H1 (cell line): ENCODE measurements at regions of chr17 and their contacts with region 1.

Region 1: GRCh38 chr17:81094509-81095382 is 59.8 kb downstream of the BAIAP2 start:
- DNase-seq: peak; percentile 73 to 76
- H3K4me3 ChIP-seq: no peak overlapping the region; a peak in 1 of 8 replicates
- H3K27ac ChIP-seq: no peak overlapping the region; the same call in 1 of the 2 replicates
- H3K4me1 ChIP-seq: peaks cover 7 to 40% (median 30%) of the 10 kb centered on the region in 4 experiments
- H3K27me3 ChIP-seq: no peaks in the 10 kb centered on the region
- CTCF ChIP-seq: no peak
- EP300 ChIP-seq: peak in 1 of 2 experiments; percentile 46; a peak in 1 of 3 replicates
- POLR2A ChIP-seq: no peak
- RAD21 ChIP-seq: no peak

Region 2: GRCh38 chr17:80894439-80894721 is 200.4 kb before region 1 on chr17:
- CTCF ChIA-PET with region 1: no interaction called
- POLR2A ChIA-PET with region 1: no interaction called
- DNase-seq: no peak
- H3K4me3 ChIP-seq: no peak overlapping the region
- H3K27ac ChIP-seq: no peak overlapping the region
- H3K4me1 ChIP-seq: no peaks in the 10 kb centered on the region
- H3K27me3 ChIP-seq: no peaks in the 10 kb centered on the region; a peak in 1 of 7 replicates
- CTCF ChIP-seq: peak in 1 of 3 experiments; percentile 21; a peak in 1 of 4 replicates
- EP300 ChIP-seq: no peak
- POLR2A ChIP-seq: no peak
- RAD21 ChIP-seq: no peak; a peak in 1 of 4 replicates

Region 3: GRCh38 chr17:80997424-80997841 is 97.3 kb before region 1 on chr17:
- CTCF ChIA-PET with region 1: no interaction called
- POLR2A ChIA-PET with region 1: no interaction called
- DNase-seq: no peak
- H3K4me3 ChIP-seq: no peak overlapping the region
- H3K27ac ChIP-seq: no peak overlapping the region
- H3K4me1 ChIP-seq: peaks cover 0 to 2% (median under 1%) of the 10 kb centered on the region in 4 experiments; a peak in 5 of 7 replicates
- H3K27me3 ChIP-seq: peaks cover 0 to 5% (median 3%) of the 10 kb centered on the region in 4 experiments; a peak in 3 of 7 replicates
- CTCF ChIP-seq: no peak
- EP300 ChIP-seq: no peak
- POLR2A ChIP-seq: no peak
- RAD21 ChIP-seq: no peak

Region 4: DNA sequence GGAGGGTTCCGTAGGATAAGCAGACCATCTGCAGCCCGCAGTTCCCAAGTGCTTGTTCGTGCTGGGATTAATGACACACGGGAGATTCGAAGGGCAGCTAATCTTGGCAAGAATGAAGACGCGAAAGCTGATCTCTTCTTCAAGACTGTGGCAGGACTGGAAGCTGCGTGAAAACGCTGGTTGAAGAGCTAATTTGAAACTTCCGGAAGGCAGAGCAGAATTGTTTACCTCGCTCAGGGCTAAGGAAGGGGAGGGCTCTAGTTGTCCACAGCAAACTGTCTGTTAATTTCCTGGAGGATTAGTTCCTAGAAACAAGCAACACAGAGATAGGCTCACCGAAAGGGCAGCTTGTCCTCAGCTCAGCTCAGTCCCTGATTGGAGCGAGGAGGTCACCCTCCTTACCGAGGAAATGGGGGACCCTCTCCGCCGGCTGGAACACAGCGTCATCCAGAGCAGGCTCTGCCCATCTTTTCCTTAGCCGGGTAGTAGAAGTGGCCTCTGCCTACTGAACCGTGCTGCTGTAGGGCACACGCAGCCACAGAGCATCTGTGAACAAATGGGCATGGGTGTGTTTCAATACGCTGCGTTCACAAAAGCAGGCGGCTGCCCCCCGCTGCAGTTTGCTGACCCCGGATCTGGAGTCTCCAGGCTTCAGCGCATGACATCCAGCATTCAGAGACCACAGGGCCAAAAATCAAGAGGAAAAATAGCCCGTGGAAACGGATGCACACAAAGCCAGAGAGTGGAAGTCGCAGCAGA is 76.5 kb before region 1 on chr17:
- CTCF ChIA-PET with region 1: interaction called, 110 read pairs
- POLR2A ChIA-PET with region 1: interaction called, 3 read pairs
- DNase-seq: no peak
- H3K4me3 ChIP-seq: no peak overlapping the region
- H3K27ac ChIP-seq: no peak overlapping the region
- H3K4me1 ChIP-seq: peaks cover 0 to 3% (median under 1%) of the 10 kb centered on the region in 4 experiments; a peak in 4 of 7 replicates
- H3K27me3 ChIP-seq: no peaks in the 10 kb centered on the region
- CTCF ChIP-seq: no peak
- EP300 ChIP-seq: no peak
- POLR2A ChIP-seq: no peak
- RAD21 ChIP-seq: no peak

Region 5: DNA sequence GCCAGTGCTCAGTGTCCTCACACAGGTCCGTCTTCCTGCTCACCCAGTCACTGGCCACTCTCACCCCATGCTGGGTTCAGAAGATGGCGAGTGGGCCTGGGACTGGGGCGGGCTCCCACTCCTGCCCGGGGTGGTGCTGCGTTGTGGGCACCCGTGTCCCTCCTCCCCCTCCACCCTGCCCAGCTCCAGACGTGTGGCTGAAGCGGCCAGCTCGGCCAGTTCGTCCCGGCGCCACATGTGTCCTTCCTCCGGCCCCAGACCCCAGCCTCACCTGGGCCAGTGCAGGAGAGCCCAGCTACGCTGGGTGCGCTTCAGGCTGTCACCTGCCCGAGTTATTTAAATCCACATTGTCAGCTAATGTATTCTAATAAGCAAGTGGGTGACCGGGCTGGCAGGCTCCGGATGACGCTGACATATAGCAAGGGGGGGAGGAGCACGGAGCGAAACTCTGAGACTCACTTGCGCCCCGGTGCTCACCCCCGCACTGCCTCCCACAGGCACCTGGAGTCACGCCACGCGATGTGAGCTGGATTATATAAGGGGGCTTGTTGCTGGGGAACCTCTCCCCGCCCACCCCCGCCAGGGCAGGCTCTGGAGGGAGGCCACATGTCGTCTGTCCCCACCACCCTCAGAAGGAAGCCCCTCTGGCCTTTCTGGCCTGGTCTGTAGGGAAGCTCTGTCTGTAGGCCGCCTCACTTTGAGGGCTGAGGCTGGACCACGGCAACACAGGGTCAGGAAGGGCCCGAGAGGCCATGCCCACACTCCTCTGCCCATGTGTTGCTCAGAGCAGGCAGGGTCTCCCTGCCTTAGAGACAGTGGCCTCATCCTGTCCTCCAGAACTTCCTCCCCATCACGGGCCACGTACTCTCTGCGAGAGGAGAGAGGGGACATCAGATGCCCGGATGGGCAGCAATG is 66.9 kb before region 1 on chr17:
- CTCF ChIA-PET with region 1: interaction called, 110 read pairs
- POLR2A ChIA-PET with region 1: interaction called, 3 read pairs
- DNase-seq: no peak
- H3K4me3 ChIP-seq: no peak overlapping the region
- H3K27ac ChIP-seq: no peak overlapping the region
- H3K4me1 ChIP-seq: no peaks in the 10 kb centered on the region
- H3K27me3 ChIP-seq: no peaks in the 10 kb centered on the region; a peak in 3 of 7 replicates
- CTCF ChIP-seq: no peak
- EP300 ChIP-seq: no peak
- POLR2A ChIP-seq: no peak
- RAD21 ChIP-seq: no peak

Region 6: DNA sequence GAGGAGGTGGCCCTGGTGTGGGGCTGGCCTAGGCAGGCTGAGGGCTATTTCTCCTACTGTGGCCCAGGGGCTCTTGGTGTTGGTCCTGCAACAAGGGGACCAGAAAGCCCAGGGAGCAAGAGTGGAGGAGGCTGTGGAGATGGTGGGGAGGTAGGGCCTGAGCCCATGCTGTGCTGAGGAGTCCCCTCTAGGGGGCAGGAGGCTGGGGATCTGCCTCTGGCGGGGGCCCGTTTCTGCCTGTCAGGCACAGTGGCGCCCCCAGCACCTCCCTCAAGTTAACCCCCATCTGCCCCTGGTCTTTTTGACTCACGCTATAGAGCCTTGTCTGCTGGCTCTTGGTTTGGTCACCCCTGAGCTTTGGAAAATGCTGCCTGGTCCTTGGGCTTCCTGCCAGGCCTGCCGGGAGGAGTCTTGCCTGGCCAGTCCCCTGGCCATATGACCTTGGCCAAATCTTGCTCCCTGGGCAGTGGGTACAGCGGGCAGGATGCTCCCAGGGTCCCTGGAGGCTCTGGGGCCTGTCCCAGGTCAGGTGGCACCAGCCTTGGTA is 53.9 kb before region 1 on chr17:
- CTCF ChIA-PET with region 1: interaction called, 103 read pairs
- POLR2A ChIA-PET with region 1: interaction called, 6 read pairs
- DNase-seq: peak in 1 of 2 experiments; percentile 78
- H3K4me3 ChIP-seq: no peak overlapping the region
- H3K27ac ChIP-seq: no peak overlapping the region
- H3K4me1 ChIP-seq: peaks cover 0 to 17% (median 6%) of the 10 kb centered on the region in 4 experiments; a peak in 6 of 7 replicates
- H3K27me3 ChIP-seq: peaks cover 0 to 6% (median 0%) of the 10 kb centered on the region in 4 experiments; a peak in 3 of 7 replicates
- CTCF ChIP-seq: peak; percentile 73 to 91 (median 75)
- EP300 ChIP-seq: no peak
- POLR2A ChIP-seq: no peak
- RAD21 ChIP-seq: peak; percentile 42 to 44; a peak in 2 of 4 replicates

Region 7: DNA sequence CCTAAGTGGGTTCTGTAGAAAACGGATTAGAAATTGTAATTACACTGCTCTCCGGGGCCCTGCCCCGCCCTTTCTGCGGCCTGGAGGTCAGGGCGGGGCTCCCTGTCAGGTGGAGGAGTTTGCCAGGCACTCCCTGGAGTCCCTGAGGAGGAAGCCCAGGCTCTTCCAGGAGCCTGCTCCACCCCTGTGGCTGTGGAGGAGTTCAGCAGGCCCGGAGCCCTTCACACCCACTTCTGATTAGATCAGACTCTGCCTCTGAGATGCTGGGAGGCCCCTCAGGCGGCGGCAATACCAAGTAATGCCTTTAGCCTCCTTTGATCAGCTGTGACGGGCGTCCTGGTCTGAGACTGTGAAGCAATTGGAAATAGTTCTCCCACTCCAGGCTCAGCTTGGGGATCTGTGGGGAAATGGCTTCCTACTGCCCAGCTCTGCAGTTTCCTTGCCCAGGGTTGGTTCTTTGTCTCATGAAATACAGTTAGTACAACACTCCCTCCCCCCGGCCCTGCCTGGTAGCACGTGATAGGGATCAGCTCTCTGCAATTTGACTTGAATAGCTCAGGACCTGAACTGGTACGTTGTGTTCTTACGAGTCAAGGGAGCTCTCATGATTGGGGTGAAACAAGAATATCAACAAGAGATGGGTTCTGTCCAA is 37.5 kb before region 1 on chr17:
- CTCF ChIA-PET with region 1: interaction called, 21 read pairs
- POLR2A ChIA-PET with region 1: interaction called, 3 read pairs
- DNase-seq: no peak
- H3K4me3 ChIP-seq: no peak overlapping the region
- H3K27ac ChIP-seq: no peak overlapping the region
- H3K4me1 ChIP-seq: peaks cover 0 to 2% (median 0%) of the 10 kb centered on the region in 4 experiments; a peak in 1 of 7 replicates
- H3K27me3 ChIP-seq: no peaks in the 10 kb centered on the region
- CTCF ChIP-seq: no peak
- EP300 ChIP-seq: peak in 1 of 2 experiments; percentile 60; a peak in 1 of 3 replicates
- POLR2A ChIP-seq: no peak
- RAD21 ChIP-seq: no peak

Region 8: DNA sequence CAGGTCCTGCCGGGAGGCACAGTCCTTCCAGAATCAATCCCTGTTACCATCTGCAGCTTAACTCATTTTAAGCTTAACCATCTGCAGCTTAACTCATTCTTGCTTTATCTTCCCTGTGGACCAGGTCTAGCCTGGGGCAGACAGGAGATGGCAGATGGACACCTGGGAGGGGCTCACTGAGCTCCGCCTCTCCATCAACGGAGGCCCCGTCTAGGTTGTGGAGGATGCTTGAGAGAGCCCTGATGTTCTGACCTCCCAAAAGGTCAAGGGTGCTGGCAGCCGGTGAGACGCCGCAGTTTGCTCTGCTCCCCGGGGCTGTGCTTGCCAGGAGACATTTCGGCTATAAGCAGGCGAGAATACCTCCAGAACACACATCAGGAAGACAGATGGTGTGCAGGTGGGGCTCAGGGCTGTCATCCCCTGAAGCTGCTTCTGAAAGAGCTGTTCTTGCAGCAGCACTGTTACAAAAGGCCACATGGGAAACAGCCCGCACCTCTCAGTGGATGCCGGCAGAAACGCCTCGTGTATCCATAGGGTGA is 18.5 kb before region 1 on chr17:
- CTCF ChIA-PET with region 1: interaction called, 35 read pairs
- POLR2A ChIA-PET with region 1: interaction called, 3 read pairs
- DNase-seq: no peak
- H3K4me3 ChIP-seq: no peak overlapping the region
- H3K27ac ChIP-seq: no peak overlapping the region
- H3K4me1 ChIP-seq: peaks cover 0 to 10% (median 3%) of the 10 kb centered on the region in 4 experiments; a peak in 3 of 7 replicates
- H3K27me3 ChIP-seq: no peaks in the 10 kb centered on the region
- CTCF ChIP-seq: no peak
- EP300 ChIP-seq: no peak
- POLR2A ChIP-seq: no peak
- RAD21 ChIP-seq: no peak

Region 9: DNA sequence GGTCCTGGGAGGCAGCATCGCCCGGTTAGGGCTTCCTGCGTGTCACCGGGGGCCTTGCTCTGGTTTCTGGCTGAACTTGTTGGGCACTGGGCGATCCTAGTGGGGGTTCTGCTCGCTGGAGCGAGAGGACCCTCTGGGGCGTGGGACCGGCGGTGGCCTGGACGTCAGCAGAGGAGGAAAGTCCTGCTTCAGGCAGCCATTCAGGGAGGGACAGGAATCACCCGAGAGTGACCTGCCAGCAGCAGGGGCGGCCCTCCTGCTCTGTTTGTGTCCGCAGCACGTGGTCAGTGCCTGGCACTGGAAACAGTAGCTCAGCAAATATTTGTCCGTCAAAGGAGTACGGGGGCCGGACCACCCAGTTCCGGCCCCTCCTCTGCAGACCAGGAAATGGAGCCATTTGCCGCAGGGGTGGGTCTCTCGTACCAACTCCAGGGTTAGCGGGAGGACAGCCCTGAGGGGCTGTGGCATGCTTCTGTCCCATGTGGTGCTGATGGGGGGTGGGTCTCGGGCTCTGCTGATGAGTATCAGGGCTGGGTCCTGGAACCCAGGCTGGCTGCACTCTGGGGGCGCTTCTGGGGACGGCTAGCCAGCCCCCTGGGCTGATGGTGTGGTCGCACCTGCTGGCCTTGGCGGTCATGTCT is 11.5 kb before region 1 on chr17:
- CTCF ChIA-PET with region 1: interaction called, 35 read pairs
- POLR2A ChIA-PET with region 1: interaction called, 3 read pairs
- DNase-seq: no peak
- H3K4me3 ChIP-seq: no peak overlapping the region
- H3K27ac ChIP-seq: no peak overlapping the region
- H3K4me1 ChIP-seq: no peaks in the 10 kb centered on the region; a peak in 1 of 7 replicates
- H3K27me3 ChIP-seq: no peaks in the 10 kb centered on the region
- CTCF ChIP-seq: no peak
- EP300 ChIP-seq: no peak
- POLR2A ChIP-seq: no peak
- RAD21 ChIP-seq: no peak

Region 10: GRCh38 chr17:81142301-81143199 is 47.8 kb after region 1 on chr17:
- CTCF ChIA-PET with region 1: no interaction called
- POLR2A ChIA-PET with region 1: no interaction called
- DNase-seq: peak; percentile 47 to 86
- H3K4me3 ChIP-seq: no peak overlapping the region
- H3K27ac ChIP-seq: no peak overlapping the region
- H3K4me1 ChIP-seq: peaks cover 0 to 2% (median 0%) of the 10 kb centered on the region in 4 experiments; a peak in 4 of 7 replicates
- H3K27me3 ChIP-seq: no peaks in the 10 kb centered on the region
- CTCF ChIP-seq: peak; percentile 76 to 85 (median 82)
- EP300 ChIP-seq: no peak
- POLR2A ChIP-seq: no peak
- RAD21 ChIP-seq: peak; percentile 66 to 79